ENCODE measurements at regions of chr1 and their contacts with region 1.

Region 1: GRCh38 chr1:58893257-58893869 is 109.5 kb upstream of the JUN start:
- DNase-seq: no peak
- CTCF ChIP-seq: no peak

Region 2: DNA sequence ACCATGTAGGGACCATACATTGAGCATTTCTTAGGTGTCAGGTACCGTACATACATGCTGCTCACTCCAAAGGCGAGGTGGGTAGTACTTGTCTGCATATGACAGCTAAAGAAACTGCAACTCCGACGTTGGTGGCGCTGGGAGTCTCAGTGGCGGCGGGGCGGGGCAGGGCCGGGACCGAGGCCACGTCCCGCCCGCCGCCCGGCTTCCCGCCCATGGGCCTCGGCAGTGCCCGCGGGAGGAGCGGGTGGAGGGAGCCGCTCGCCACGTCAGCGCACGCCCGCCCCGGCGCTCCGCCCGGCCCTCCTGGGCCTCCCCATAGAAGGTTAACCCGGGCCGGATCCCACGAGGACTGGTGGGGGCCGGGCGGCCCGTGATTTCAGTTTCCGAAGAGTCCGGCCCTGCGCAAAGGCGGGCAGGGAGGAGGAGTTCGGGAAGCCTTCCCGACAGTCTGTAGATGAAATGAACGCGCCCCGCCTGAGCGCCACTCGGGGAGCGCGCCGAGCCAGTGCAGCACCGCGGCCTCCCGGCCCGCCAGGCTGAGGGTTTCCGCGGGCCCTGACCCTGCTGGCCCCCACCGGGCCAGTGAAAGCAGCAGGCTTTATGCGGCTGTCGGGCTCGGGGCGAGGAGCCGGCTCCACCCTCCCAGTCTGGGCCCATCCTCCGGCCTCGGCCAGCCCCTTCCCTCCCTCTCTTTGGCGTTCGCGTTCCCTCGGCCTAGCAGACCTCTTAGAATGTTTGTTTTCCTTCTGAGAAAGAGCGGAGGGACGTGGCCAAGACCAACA is 10.3 kb after region 1 on chr1:
- CTCF ChIA-PET with region 1: interaction called, 15 read pairs
- POLR2A ChIA-PET with region 1: no interaction called
- DNase-seq: peak; percentile 87
- CTCF ChIP-seq: no peak

Measured in GM10248 (cell line).